Astrocyte of the cerebellum (primary cell): ENCODE measurements at regions of chr13 and their contacts with region 1.

Region 1: DNA sequence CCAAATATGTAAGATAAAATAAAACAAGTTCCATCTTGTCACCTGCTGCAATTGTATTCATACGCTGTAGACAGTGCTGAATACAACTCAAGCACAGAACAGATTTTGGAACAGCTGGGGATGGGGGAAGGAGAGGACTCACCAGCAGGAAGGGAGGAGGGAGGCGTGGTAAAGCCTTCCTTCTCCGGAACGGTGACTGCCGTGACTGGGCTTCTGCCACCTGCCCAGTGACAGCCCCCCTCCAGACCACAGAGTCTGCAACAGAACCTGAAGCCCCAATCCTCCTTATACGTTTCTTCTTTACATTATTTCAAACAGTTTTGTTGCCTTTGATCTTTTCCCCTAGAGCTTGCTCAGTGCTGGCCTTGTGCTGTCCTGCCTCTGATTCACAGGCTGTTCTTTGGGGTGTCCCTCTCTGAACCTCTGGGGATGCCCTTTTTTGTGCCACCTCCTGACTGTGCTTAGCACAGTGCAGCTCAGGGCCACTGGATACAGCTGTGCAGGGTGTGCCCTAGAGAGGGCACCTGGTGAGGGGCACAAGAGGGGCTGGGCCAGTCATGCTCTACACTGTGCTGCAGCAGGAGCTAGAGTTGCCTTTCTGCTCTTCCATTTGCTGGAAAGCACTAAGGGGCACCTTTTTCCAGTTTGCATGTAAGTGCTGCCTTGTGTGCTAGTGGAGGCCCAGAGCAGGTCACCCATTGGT is 213.0 kb downstream of the ZIC5 start:
- DNase-seq: no peak
- H3K4me3 ChIP-seq: no peak overlapping the region
- CTCF ChIP-seq: no peak

Region 2: GRCh38 chr13:99709134-99709533 is 49.5 kb before region 1 on chr13:
- in situ Hi-C with region 1: loop called (anchors 5 kb)
- DNase-seq: no peak
- H3K4me3 ChIP-seq: no peak overlapping the region
- CTCF ChIP-seq: no peak

Region 3: DNA sequence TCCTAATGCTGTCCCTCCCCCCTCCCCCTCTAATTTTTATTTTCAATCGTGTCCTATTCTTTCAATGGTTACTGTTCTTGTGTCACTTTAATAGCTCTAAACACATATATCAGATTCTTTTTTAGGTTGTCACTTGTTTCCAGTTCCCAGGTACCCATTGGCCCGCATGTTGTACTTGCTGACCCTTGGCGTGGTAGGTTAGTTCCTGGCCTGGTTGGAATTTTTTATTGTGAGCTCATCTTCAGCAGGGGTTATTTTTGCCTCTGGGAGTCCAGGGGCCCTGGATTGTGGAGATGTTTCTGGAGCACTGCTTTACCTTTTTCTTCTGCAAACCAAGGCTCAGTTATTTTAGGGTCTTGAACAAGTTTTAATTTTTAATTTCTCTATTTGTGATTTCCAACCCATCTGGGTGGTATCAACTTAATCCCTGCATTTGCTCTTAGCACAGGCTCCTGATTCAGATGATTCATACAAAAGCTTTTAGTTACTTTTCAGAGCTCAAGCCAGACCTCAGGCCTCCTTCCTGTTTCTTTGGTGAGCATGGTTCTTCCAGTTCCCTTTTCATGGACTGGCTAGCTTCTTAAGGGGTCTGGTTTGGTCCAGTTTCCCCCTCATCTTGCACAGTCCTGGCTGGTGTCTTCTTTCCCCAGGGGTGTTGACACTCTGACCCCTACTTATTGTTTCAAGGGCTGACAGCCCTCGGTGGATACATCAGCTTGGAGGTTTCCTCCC is 36.8 kb before region 1 on chr13:
- in situ Hi-C with region 1: no loop called
- DNase-seq: no peak
- H3K4me3 ChIP-seq: no peak overlapping the region
- CTCF ChIP-seq: no peak

Region 4: GRCh38 chr13:99796175-99796819 is 37.7 kb after region 1 on chr13:
- in situ Hi-C with region 1: loop called (anchors 5 kb)
- DNase-seq: peak; percentile 51
- H3K4me3 ChIP-seq: no peak overlapping the region
- CTCF ChIP-seq: no peak

Region 5: GRCh38 chr13:99847318-99847750 is 88.7 kb after region 1 on chr13:
- in situ Hi-C with region 1: no loop called
- DNase-seq: no peak
- H3K4me3 ChIP-seq: no peak overlapping the region
- CTCF ChIP-seq: no peak